Activated CD8-positive, alpha-beta T cell treated with anti-CD3 and anti-CD28 coated beads for 36 hours (primary cell): ENCODE measurements at regions of chr9 and their contacts with region 1.

Region 1: GRCh38 chr9:133701862-133702797 is 36.0 kb downstream of the SARDH start:
- DNase-seq: peak; percentile 83
- ATAC-seq: peak; percentile 88
- H3K4me3 Mint-ChIP-seq: peak overlapping the region; percentile 84
- H3K27ac Mint-ChIP-seq: peak overlapping the region; percentile 90
- H3K4me1 Mint-ChIP-seq: peaks cover 43% of the 10 kb centered on the region
- H3K27me3 Mint-ChIP-seq: no peaks in the 10 kb centered on the region
- CTCF ChIP-seq: no peak

Region 2: DNA sequence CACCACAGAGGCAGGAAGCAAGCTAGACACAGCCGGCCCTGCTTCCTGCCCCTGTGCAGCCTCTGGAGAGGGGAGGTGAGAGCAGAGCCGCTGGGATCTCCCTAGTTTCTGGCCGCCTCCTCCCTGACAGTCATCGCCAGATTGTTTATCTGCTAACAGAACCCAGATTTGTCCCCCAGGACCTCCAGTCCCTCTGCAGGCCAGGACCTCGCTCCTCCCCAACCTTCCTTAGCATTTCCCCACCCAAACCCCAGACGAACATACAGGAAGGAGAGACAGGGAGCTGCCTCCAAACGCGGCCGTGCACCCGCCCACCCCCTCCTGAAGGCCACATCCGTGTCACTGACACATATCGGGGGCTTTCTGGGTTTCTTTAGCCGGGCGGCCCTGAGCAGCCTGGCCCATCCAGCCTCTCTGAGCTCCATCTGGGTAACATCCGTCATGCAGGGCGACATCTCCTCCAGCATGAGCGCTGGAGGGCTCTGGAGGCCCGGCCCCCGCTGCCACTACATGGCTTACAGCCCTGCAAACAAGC is 18.5 kb before region 1 on chr9:
- CTCF ChIA-PET with region 1: interaction called, 5 read pairs
- POLR2A ChIA-PET with region 1: interaction called, 33 read pairs
- intact Hi-C with region 1: no loop called
- DNase-seq: peak; percentile 93
- ATAC-seq: peak; percentile 94
- H3K4me3 Mint-ChIP-seq: peak overlapping the region; percentile 65
- H3K27ac Mint-ChIP-seq: peak overlapping the region; percentile 99
- H3K4me1 Mint-ChIP-seq: peaks cover 22% of the 10 kb centered on the region
- H3K27me3 Mint-ChIP-seq: no peaks in the 10 kb centered on the region
- CTCF ChIP-seq: no peak

Region 3: GRCh38 chr9:133691626-133692363 is 10.3 kb before region 1 on chr9:
- CTCF ChIA-PET with region 1: no interaction called
- POLR2A ChIA-PET with region 1: interaction called, 27 read pairs
- intact Hi-C with region 1: no loop called
- DNase-seq: peak; percentile 70
- ATAC-seq: peak; percentile 92
- H3K4me3 Mint-ChIP-seq: no peak overlapping the region
- H3K27ac Mint-ChIP-seq: no peak overlapping the region
- H3K4me1 Mint-ChIP-seq: peaks cover 15% of the 10 kb centered on the region
- H3K27me3 Mint-ChIP-seq: no peaks in the 10 kb centered on the region
- CTCF ChIP-seq: no peak

Region 4: GRCh38 chr9:133768859-133769425 is 66.8 kb after region 1 on chr9:
- CTCF ChIA-PET with region 1: no interaction called
- POLR2A ChIA-PET with region 1: no interaction called
- intact Hi-C with region 1: no loop called
- DNase-seq: peak; percentile 25
- ATAC-seq: no peak
- H3K4me3 Mint-ChIP-seq: no peak overlapping the region
- H3K27ac Mint-ChIP-seq: no peak overlapping the region
- H3K4me1 Mint-ChIP-seq: no peaks in the 10 kb centered on the region
- H3K27me3 Mint-ChIP-seq: no peaks in the 10 kb centered on the region
- CTCF ChIP-seq: no peak